Right lobe of liver (tissue), 6 donors: ENCODE measurements at regions of chr12 and their contacts with region 1.

Region 1: GRCh38 chr12:13100882-13101769 is 2.3 kb downstream of the GSG1 start:
- DNase-seq: peak; percentile 81 to 88 (median 88)
- ATAC-seq: peak; percentile 80 to 87 (median 86)
- H3K4me3 ChIP-seq: peak overlapping the region; percentile 39 to 66 (median 53)
- H3K27ac ChIP-seq: peak overlapping the region; percentile 60 to 91 (median 60)
- H3K4me1 ChIP-seq: peaks cover 0 to 13% (median 0%) of the 10 kb centered on the region in 4 donors
- H3K27me3 ChIP-seq: no peaks in the 10 kb centered on the region
- CTCF ChIP-seq: no peak
- POLR2A ChIP-seq: no peak

Region 2: DNA sequence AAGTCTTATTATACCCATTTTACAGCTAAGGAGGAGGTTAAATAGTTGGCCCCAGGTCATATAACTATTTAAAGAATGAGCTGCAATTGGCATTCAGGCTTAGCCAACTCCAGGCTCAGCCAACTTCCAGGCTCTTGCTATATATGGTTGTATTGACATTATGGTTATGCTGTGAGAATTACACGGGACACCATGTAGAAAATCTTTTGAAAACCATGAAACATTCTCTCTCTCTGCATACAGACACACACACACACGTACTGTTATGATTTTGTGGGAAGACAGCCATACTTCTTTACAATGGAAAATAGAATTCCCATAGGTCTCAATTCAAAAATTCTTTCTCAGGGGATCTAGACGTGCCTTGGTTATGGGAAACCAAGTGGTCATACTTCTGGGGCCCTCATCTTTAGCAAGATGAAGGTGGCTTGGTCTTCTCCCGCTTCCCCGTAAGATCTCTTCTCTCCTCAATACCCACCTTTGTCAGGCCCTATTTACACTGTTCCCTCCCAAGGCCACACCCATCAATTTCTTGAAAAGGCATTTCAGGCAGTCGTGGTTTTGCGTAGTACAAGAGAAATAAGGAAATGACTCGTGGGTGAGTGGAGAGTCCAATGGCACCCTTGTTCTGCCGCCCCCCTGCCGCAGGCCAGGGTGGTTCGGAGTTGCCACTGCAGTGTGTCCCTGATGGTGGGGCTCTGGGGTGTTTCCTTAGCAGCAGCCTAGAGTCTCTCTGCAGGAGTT is 219.8 kb before region 1 on chr12:
- intact Hi-C with region 1: no loop called
- DNase-seq: no peak
- ATAC-seq: no peak
- H3K4me3 ChIP-seq: no peak overlapping the region
- H3K27ac ChIP-seq: no peak overlapping the region
- H3K4me1 ChIP-seq: no peaks in the 10 kb centered on the region
- H3K27me3 ChIP-seq: no peaks in the 10 kb centered on the region
- CTCF ChIP-seq: no peak
- POLR2A ChIP-seq: no peak

Region 3: GRCh38 chr12:13211859-13212664 is 110.9 kb after region 1 on chr12:
- intact Hi-C with region 1: loop called (anchors 5 to 10 kb)
- DNase-seq: peak in 1 of 3 donors; percentile 64
- ATAC-seq: peak; percentile 80 to 88 (median 85)
- H3K4me3 ChIP-seq: no peak overlapping the region
- H3K27ac ChIP-seq: no peak overlapping the region
- H3K4me1 ChIP-seq: no peaks in the 10 kb centered on the region
- H3K27me3 ChIP-seq: no peaks in the 10 kb centered on the region
- CTCF ChIP-seq: peak; percentile 76 to 91 (median 88)
- POLR2A ChIP-seq: no peak

Region 4: DNA sequence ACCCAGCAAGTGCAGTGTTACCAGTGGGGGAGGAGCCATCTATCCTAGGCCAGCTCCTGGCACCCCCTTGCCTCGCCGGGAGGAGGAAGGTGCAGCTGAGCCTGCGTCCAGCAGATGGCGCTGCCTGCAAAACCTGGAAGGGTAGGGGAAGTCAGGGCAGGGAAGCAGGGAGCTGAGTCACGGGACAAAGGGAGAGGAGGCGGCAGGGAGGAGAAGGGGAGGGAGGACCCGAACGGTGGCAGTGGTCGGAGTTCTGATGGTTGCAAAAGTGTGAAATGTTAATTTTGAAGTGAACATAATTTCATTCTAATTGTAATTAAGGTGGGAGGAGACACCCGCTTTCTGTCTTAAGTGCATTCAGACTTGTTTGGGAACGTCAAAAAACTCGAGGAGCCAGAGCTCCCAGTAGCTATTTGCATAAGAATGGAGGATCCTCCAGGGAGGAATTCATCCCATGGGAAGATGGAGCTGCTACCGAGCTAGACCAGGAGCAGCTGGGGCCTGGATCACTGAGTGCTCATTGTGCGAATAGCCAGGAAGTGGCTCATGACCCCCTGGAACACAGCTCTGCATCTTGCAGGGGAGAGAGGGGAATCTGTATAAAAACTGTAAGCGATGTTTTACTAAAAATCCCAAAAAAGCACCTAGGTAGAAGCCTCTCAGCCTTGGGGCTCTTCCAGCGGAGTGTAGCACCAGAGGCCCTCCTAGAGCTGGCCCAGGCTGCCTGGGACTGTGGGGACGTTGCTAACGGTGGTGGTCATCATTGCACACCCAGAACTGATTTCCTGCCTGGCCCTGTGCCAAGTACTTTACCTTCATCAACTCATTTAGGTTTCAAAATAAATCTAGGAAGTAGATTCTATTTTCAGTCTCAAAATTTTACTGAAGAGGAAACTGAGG is 154.9 kb after region 1 on chr12:
- intact Hi-C with region 1: no loop called
- DNase-seq: peak; percentile 91 to 94 (median 93)
- ATAC-seq: peak; percentile 100
- H3K4me3 ChIP-seq: peak overlapping the region in 1 of 3 donors; percentile 39
- H3K27ac ChIP-seq: no peak overlapping the region
- H3K4me1 ChIP-seq: peaks cover 0 to 5% (median 0%) of the 10 kb centered on the region in 4 donors
- H3K27me3 ChIP-seq: no peaks in the 10 kb centered on the region
- CTCF ChIP-seq: peak; percentile 96 to 98 (median 98)
- POLR2A ChIP-seq: no peak